T-cell (primary cell): ENCODE measurements at regions of chr16 and their contacts with region 1.

Region 1: DNA sequence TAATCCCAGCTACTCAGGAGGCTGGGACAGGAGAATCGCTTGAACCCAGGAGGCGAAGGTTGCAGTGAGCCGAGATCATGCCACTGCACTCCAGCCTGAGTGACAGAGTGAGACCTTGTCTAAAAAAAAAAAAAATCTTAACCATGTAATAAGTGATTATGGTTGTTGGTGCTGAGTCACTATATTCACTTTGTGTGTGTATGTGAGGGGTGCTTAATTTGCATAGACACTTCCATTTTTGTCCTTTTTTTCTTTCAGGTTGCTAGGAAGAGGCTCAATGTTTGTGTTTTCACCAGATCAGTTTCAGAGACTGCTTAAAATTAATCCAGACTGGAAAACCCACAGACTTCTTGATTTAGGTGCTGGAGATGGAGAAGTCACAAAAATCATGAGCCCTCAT is 18.2 kb downstream of the METTL9 start:
- DNase-seq: no peak
- ATAC-seq: no peak
- H3K4me3 ChIP-seq: no peak overlapping the region
- H3K4me3 Mint-ChIP-seq: no peak overlapping the region
- H3K27ac ChIP-seq: no peak overlapping the region
- H3K27ac Mint-ChIP-seq: no peak overlapping the region
- H3K4me1 ChIP-seq: peaks cover 6 to 21% of the 10 kb centered on the region in 2 experiments
- H3K4me1 Mint-ChIP-seq: peaks cover 52 to 69% (median 64%) of the 10 kb centered on the region in 3 donors
- H3K27me3 ChIP-seq: no peaks in the 10 kb centered on the region
- H3K27me3 Mint-ChIP-seq: no peaks in the 10 kb centered on the region

Region 2: DNA sequence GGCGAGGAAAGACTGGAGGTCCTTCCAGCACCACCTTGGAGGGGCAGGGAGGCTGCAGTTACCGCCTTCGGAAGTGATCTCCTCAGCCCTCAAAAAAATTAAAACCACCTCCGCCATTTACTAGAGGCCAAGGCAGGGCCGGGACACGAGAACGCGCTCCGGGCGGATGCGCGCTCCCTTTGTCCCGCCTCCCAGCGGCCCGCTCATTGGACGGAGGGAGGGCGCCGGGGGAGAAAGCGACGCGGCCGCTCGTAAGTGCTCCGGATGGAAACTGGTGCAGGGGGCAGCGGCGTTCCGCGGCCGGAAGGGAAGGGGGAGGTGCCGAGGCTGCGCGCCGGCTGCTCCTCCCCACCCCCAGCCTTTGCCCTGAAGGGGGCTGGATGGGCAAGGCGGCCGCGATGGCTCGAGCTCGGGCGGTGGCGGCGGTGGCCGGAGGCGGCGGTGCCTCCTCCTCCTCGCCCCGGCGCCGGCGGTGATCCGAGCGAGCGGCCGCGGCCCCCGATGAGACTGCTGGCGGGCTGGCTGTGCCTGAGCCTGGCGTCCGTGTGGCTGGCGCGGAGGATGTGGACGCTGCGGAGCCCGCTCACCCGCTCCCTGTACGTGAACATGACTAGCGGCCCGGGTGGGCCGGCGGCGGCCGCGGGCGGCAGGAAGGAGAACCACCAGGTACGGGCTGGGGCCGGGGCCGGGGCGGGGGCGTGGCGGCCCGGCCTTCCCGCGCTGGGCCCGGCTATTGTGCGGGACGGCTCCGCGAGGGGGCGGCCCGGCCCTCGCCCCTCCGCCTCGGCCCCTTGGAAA is 18.2 kb before region 1 on chr16 and contains the start of gene METTL9:
- CTCF ChIA-PET with region 1: interaction called, 3 to 14 read pairs
- POLR2A ChIA-PET with region 1: no interaction called
- DNase-seq: peak; percentile 89 to 97 (median 93)
- ATAC-seq: peak; percentile 93 to 95 (median 93)
- H3K4me3 ChIP-seq: peak within 1 kb of the TSS; percentile 68 to 94
- H3K4me3 Mint-ChIP-seq: peak within 1 kb of the TSS; percentile 87 to 92 (median 87)
- H3K27ac ChIP-seq: peak within 1 kb of the TSS; percentile 85
- H3K27ac Mint-ChIP-seq: peak within 1 kb of the TSS; percentile 94
- H3K4me1 ChIP-seq: peaks cover 18 to 38% of the 10 kb centered on the region in 2 experiments
- H3K4me1 Mint-ChIP-seq: peaks cover 62 to 63% (median 62%) of the 10 kb centered on the region in 3 donors
- H3K27me3 ChIP-seq: no peaks in the 10 kb centered on the region
- H3K27me3 Mint-ChIP-seq: no peaks in the 10 kb centered on the region
- total RNA-seq, gene METTL9: 69.3 to 93.3 (median 75.5) TPM